A673 (cell line): ENCODE measurements at regions of chr3 and their contacts with region 1.

Region 1: GRCh38 chr3:71069797-71070196 is 513.7 kb downstream of the FOXP1 start:
- DNase-seq: peak; percentile 71
- H3K4me3 ChIP-seq: no peak overlapping the region
- H3K27ac ChIP-seq: peak overlapping the region; percentile 62
- H3K4me1 ChIP-seq: peaks cover 44% of the 10 kb centered on the region
- H3K27me3 ChIP-seq: no peaks in the 10 kb centered on the region
- CTCF ChIP-seq: peak; percentile 51

Region 2: GRCh38 chr3:70716832-70717231 is 353.0 kb before region 1 on chr3:
- CTCF ChIA-PET with region 1: no interaction called
- POLR2A ChIA-PET with region 1: no interaction called
- intact Hi-C with region 1: loop called (anchors 5 kb)
- DNase-seq: peak; percentile 22
- H3K4me3 ChIP-seq: no peak overlapping the region
- H3K27ac ChIP-seq: no peak overlapping the region
- H3K4me1 ChIP-seq: no peaks in the 10 kb centered on the region
- H3K27me3 ChIP-seq: no peaks in the 10 kb centered on the region
- CTCF ChIP-seq: peak; percentile 33; the same call in 1 of the 2 replicates

Region 3: DNA sequence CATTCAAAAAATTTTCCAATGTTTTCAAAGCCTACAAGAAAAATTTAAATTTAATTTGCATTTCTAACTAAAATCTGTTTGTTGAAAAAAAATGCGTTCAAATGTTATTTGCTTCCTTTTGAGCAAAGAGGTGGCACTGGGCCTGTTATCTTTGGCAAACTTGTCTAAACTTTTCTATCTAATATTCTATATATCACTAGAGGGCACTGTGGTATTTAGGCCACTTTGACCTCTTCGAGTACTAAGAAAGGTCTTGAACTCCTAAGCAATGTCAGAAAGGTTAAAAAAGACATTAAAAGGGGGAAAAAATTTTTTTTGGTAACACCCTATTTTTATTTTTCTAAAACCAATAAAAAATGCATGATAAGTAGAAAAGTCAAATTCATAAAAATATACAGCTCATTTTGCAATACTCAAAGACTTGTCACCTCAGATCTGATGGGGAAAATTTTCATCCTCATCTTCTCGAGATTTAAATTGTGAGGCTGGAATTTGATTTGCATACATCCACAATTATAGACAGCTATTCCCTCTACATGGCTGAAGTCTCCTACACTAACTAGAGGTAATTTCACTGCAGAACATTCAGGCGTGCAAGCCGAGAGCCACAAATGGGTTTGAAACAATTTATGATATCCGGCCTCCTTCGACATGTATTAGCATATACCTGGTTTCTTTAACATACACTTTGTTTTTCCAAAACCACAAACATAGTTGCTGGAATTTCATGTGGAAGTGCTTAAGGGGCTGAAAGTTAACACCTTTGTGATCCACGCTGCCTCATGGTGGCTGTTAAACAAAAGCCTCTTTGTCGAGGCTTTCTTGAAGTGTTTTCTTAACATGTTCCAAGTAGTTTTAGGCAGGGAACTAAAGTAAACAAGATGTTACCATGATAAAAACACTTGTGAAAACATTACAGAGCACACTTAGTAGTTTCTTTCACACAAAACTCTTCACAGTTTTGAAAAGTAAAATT is 62.7 kb before region 1 on chr3:
- CTCF ChIA-PET with region 1: no interaction called
- POLR2A ChIA-PET with region 1: no interaction called
- intact Hi-C with region 1: loop called (anchors 5 kb)
- DNase-seq: peak; percentile 41
- H3K4me3 ChIP-seq: no peak overlapping the region
- H3K27ac ChIP-seq: no peak overlapping the region
- H3K4me1 ChIP-seq: peaks cover 31% of the 10 kb centered on the region
- H3K27me3 ChIP-seq: no peaks in the 10 kb centered on the region
- CTCF ChIP-seq: peak; percentile 46; the same call in 1 of the 2 replicates

Region 4: DNA sequence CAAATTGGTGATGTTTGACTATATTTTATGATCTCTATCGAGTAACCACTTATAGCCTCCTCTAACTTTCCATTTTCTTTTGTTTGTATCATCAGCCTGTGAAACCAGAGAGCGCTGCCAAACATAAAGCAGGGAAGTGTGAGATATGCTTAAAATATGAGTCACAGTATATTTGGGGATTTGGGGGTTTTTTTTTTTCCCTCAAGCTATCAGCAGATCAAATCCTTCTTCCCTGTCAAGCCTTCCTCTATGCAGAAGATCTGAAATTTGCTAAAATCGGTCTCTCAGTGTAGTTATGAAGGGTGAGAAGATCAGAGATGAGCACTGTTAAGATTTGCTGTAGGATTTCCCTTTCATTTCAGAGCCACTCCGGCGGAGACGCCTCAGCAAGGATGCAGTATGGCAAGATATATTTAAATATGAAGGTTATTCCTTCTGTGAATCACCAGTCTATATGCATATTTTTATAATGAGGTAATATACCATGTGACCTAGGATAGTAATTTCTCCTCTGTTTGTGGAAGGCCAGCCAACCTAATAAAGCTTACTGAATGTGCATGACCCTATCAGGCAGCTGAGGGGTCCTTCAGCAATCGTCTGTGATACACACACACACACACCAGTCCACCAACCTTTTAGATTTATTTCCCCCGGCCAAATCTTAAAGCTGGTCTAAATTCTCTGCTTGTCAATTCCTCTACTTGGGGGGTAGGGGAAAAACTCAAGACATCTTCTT is 39.6 kb after region 1 on chr3:
- CTCF ChIA-PET with region 1: no interaction called
- POLR2A ChIA-PET with region 1: no interaction called
- intact Hi-C with region 1: no loop called
- DNase-seq: no peak
- H3K4me3 ChIP-seq: no peak overlapping the region
- H3K27ac ChIP-seq: peak overlapping the region; percentile 19
- H3K4me1 ChIP-seq: peaks cover 23% of the 10 kb centered on the region
- H3K27me3 ChIP-seq: no peaks in the 10 kb centered on the region
- CTCF ChIP-seq: no peak

Region 5: GRCh38 chr3:71172951-71173350 is 103.2 kb after region 1 on chr3:
- CTCF ChIA-PET with region 1: no interaction called
- POLR2A ChIA-PET with region 1: no interaction called
- intact Hi-C with region 1: no loop called
- DNase-seq: no peak
- H3K4me3 ChIP-seq: no peak overlapping the region
- H3K27ac ChIP-seq: no peak overlapping the region
- H3K4me1 ChIP-seq: no peaks in the 10 kb centered on the region
- H3K27me3 ChIP-seq: no peaks in the 10 kb centered on the region
- CTCF ChIP-seq: no peak

Region 6: DNA sequence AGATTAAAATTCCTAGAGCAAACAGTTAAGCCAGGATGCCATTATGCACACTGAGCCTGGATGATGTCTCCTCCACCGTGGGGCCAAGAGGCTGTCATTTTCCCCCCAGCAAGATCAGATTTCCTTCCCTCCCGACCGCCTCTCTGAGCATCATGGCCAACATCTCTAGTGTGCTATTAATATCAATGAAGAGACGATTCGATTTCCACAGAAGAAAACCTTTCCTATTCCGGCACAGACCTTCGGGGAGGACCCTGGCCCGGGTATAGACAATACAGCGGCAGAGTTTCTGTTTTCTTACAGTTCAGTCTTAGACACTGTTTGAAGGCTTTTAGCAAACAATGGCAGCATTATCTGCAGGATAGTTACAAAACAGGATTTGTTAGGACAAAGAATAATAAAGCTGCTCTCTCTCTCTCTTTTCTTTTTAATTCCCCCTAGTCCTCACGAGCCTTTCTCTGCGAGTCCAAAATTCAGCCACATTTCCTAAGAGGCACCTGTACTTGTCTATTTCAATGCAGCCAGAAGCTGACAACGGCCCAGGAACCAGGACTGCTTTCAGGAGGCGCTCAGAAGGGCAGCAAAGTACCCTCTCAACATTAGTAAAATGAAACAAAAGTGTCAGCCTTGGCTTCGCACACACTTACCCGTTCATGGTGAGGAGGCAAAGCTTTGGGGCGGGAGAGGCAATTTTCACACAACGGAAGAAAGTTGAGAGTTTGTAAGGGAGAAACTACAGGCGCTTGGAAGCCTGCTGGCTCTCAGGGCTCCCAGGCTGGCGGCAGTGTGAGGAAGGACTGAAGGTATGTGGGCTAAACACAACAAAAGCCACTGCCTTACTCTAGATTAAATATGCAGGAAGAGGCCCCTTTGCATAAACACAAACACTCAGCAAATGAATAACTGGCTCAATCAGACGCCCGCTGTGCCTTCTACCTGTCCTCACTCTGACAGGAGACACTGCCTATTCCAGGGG is 235.7 kb after region 1 on chr3:
- CTCF ChIA-PET with region 1: no interaction called
- POLR2A ChIA-PET with region 1: no interaction called
- intact Hi-C with region 1: loop called (anchors 2 kb)
- DNase-seq: peak; percentile 37
- H3K4me3 ChIP-seq: peak overlapping the region; percentile 41
- H3K27ac ChIP-seq: peak overlapping the region; percentile 88
- H3K4me1 ChIP-seq: peaks cover 42% of the 10 kb centered on the region
- H3K27me3 ChIP-seq: no peaks in the 10 kb centered on the region
- CTCF ChIP-seq: no peak